PC-3 (cell line): ENCODE measurements at regions of chr9 and their contacts with region 1.

Region 1: GRCh38 chr9:9790216-9790872 is 822.5 kb downstream of the PTPRD start:
- DNase-seq: peak; percentile 44
- ATAC-seq: peak; percentile 42
- H3K4me3 ChIP-seq: no peak overlapping the region
- H3K27ac ChIP-seq: no peak overlapping the region
- H3K4me1 ChIP-seq: no peaks in the 10 kb centered on the region
- H3K27me3 ChIP-seq: no peaks in the 10 kb centered on the region
- CTCF ChIP-seq: peak; percentile 63

Region 2: DNA sequence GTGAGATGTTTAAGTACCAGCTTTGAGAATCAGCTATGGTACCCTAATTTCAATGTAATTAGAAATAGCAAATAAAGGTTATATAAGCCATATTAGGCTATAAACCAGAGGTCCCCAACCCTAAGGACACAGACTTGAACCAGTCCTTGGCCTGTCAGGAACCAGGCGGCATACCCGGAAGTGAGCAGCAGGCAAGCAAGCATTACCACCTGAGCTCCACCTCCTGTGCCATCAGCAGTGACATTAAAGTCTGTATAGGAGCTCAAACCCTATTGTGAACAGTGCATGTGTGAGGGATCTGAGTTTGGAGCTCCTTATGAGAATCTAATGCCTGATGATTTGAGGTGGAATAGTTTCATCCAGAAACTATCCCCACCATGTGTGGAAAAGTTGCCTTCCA is 187.0 kb before region 1 on chr9:
- CTCF ChIA-PET with region 1: interaction called, 16 read pairs
- POLR2A ChIA-PET with region 1: no interaction called
- intact Hi-C with region 1: loop called (anchors 1 kb)
- DNase-seq: no peak
- ATAC-seq: no peak
- H3K4me3 ChIP-seq: no peak overlapping the region
- H3K27ac ChIP-seq: no peak overlapping the region
- H3K4me1 ChIP-seq: no peaks in the 10 kb centered on the region
- H3K27me3 ChIP-seq: no peaks in the 10 kb centered on the region
- CTCF ChIP-seq: no peak

Region 3: GRCh38 chr9:9612270-9612669 is 178.1 kb before region 1 on chr9:
- CTCF ChIA-PET with region 1: interaction called, 16 read pairs
- POLR2A ChIA-PET with region 1: interaction called, 3 read pairs
- intact Hi-C with region 1: no loop called
- DNase-seq: no peak
- ATAC-seq: no peak
- H3K4me3 ChIP-seq: no peak overlapping the region
- H3K27ac ChIP-seq: no peak overlapping the region
- H3K4me1 ChIP-seq: no peaks in the 10 kb centered on the region
- H3K27me3 ChIP-seq: no peaks in the 10 kb centered on the region
- CTCF ChIP-seq: no peak

Region 4: DNA sequence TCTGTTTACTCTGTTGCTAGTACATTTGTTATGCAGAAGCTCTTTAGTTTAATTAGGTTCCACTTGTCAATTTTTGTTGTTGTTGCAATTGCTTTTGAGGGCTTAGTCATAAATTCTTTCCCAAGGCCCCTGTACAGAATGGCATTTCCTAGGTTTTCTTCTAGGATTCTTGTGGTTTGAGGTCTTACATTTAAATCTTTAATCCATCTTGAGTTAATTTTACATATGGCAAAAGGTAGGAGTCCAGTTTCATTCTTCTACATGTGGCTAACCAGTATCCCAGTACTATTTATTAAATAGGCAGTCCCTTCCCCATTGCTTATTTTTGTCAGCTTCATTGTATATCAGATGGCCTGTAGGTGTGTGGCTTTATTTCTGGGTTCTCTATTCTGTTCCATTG is 30.1 kb after region 1 on chr9:
- CTCF ChIA-PET with region 1: no interaction called
- POLR2A ChIA-PET with region 1: interaction called, 33 read pairs
- intact Hi-C with region 1: no loop called
- DNase-seq: no peak
- ATAC-seq: no peak
- H3K4me3 ChIP-seq: no peak overlapping the region
- H3K27ac ChIP-seq: no peak overlapping the region
- H3K4me1 ChIP-seq: no peaks in the 10 kb centered on the region
- H3K27me3 ChIP-seq: no peaks in the 10 kb centered on the region
- CTCF ChIP-seq: no peak

Region 5: DNA sequence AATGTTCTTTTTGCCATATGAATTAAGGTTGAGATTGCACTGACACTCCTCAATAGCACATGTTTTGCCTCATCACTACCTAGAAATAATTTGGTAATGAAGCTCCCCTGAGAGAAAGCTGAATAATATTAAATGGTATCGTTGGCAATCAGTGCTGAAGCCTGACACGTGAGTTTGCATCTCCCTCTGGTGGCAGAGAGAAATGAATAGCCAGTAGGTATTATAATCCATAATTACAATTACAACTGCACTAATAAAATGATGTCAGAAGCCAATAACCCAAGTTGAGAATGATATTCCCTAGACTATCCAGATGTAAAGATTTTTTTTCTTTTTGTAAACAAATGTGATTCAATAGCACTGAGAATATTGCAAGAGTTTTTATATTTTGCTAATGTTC is 122.1 kb after region 1 on chr9:
- CTCF ChIA-PET with region 1: no interaction called
- POLR2A ChIA-PET with region 1: no interaction called
- intact Hi-C with region 1: loop called (anchors 5 kb)
- DNase-seq: no peak
- ATAC-seq: no peak
- H3K4me3 ChIP-seq: no peak overlapping the region
- H3K27ac ChIP-seq: no peak overlapping the region
- H3K4me1 ChIP-seq: no peaks in the 10 kb centered on the region
- H3K27me3 ChIP-seq: no peaks in the 10 kb centered on the region
- CTCF ChIP-seq: peak; percentile 28; the same call in 1 of the 2 replicates